GM13977 (cell line): ENCODE measurements at regions of chr4 and their contacts with region 1.

Region 1: GRCh38 chr4:16289897-16290554 is 63.8 kb upstream of the TAPT1 start:
- DNase-seq: peak; percentile 54
- CTCF ChIP-seq: peak; percentile 50

Region 2: DNA sequence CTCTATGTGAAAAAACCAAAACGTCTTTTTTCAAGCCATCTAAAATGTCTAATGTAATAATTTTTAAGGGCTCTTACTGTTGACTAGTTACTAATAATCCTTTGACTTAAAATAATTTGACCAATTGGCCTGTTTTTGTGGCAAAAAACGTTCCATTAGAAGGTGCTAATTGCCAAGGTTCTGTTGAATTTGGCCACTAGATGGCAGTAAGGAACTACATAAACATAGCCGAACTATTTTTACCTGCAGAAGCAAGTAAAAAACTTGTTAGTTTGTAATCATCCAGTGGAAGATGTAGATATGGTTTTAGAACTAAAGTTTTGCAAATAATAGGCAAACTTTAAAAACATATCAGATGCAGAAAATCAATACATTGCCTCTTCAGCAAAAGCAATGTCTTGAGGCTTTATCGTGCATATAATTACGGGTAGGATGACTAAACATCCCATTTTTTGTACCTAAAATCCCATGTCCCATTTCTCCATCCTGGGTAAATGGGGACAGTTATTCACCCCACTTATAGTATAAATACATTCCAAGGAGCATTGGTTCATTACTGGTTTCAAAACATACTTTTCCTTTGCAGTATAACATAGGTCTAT is 263.8 kb before region 1 on chr4:
- in situ Hi-C with region 1: no loop called
- DNase-seq: peak; percentile 61
- CTCF ChIP-seq: peak; percentile 75

Region 3: DNA sequence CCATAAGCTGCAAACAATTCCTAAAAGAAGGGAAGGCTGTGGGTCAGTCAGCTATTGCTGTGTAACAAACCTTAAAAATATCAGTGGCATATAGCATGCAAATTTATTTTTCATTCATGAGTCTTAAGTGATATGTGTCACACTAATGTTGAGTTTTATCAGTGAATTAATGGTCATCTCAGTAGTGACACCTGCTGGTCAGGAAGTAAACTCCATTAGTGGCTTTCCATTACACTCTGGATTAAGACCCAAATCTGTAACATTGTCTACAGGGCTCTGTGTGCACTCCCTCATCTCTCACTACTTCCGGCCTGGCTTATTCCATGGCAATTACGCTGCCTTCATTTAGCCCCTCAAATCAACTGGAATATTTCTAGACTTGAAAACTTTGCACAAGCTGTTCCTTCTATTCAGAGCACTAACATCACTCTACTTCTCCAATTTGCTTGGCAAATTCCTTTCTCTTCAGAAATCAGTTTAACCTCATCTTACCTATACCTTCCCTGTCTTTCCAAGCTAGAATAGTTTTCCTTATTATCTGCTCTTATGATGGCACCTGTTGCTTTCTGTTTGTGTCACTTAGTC is 153.6 kb after region 1 on chr4:
- in situ Hi-C with region 1: loop called (anchors 25 kb)
- DNase-seq: peak; percentile 40
- CTCF ChIP-seq: peak; percentile 67

Region 4: DNA sequence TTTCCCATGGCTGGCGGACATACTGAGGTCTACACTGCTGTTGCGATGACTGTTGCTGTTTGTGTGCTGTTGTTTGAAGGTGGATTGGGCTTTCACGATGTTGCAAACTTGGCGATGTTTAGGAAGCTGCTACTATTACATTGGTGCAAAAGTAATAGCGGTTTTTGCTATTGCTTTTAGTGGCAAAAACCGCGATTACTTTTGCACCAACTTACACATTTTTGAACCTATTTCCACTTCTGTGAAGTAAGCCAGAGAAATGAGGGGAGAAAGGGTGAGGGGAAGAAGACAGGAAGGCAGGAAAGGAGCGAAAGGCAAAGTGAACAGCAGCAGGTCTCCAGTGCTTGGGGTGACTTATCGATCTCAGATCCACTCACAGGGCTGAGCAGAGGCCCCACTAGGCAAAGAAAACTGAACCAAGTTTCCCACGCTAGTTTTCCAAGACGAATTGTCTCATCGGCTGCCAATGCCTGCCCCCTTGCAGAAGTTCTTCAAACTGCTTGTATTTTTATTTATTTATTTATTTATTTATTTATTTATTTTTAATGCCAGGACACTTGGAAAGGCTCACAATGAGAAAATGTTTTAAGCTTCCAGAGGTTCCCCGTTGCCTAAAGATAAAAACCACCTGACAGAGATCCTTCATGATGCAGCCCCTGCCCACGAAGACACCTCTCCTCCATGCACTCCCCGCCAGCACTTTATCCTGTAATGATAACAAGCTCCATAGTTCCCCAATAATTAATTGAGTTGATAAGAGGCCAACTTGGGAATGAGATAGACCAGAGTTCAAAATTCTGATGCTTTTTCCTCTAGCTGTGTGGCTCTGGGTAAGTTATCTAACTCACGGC is 1178.6 kb after region 1 on chr4:
- in situ Hi-C with region 1: loop called (anchors 25 kb)
- DNase-seq: no peak
- CTCF ChIP-seq: peak; percentile 32